ENCODE measurements at regions of chr1 and their contacts with region 1.

Region 1: GRCh38 chr1:33094971-33095604 is 14.1 kb downstream of the AZIN2 start:
- DNase-seq: no peak
- H3K4me3 Mint-ChIP-seq: no peak overlapping the region
- H3K27ac Mint-ChIP-seq: no peak overlapping the region
- H3K4me1 Mint-ChIP-seq: peaks cover 55% of the 10 kb centered on the region
- H3K27me3 Mint-ChIP-seq: no peaks in the 10 kb centered on the region

Region 2: GRCh38 chr1:32817159-32817814 is 277.8 kb before region 1 on chr1 and contains the starts of genes S100PBP and YARS1:
- CTCF ChIA-PET with region 1: no interaction called
- POLR2A ChIA-PET with region 1: interaction called, 10 read pairs
- DNase-seq: peak; percentile 100
- H3K4me3 Mint-ChIP-seq: peak within 1 kb of the TSS; percentile 93
- H3K27ac Mint-ChIP-seq: peak within 1 kb of the TSS; percentile 89
- H3K4me1 Mint-ChIP-seq: peaks cover 54% of the 10 kb centered on the region
- H3K27me3 Mint-ChIP-seq: no peaks in the 10 kb centered on the region
- total RNA-seq, gene S100PBP: 78.4 to 84.0 TPM
- total RNA-seq, gene YARS1: 204 to 214 TPM

Region 3: GRCh38 chr1:32861904-32862695 is 233.0 kb before region 1 on chr1:
- CTCF ChIA-PET with region 1: no interaction called
- POLR2A ChIA-PET with region 1: no interaction called
- DNase-seq: no peak
- H3K4me3 Mint-ChIP-seq: no peak overlapping the region
- H3K27ac Mint-ChIP-seq: no peak overlapping the region
- H3K4me1 Mint-ChIP-seq: no peaks in the 10 kb centered on the region
- H3K27me3 Mint-ChIP-seq: no peaks in the 10 kb centered on the region

Region 4: DNA sequence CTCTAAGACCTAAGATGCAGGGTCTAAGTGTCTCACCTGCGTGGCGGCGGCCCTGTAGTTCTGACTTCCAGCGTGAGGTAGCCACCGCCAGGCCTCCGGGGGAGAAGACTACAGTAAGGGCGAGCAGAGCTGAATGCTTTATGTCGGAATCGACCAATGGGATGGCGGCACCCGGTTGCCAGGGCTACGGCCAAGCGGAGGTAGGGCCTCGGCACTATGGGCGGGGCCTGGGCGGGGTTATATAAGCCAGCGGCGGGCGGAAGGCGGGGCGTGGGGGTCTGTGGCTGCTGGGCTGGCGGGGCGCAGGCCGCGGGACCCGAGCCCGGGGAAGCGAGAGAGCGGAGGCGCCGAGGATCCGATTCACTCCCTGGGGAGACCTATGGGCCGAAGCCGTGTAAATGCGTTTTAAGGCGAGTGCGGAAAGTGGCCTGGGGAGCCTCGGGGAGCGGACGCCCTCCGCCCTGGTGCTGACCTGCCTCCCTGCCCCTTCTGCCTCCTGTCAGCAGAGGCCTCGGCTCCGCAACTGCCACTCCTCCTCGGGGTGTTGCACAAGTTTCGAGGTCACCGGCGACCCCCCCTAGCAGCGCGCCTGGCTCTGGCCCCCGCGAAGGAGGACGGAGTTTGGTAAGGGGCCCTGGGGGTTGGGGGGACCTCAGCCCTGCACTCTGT is 14.1 kb before region 1 on chr1 and contains the start of gene AZIN2:
- CTCF ChIA-PET with region 1: interaction called, 24 read pairs
- POLR2A ChIA-PET with region 1: interaction called, 3 read pairs
- DNase-seq: peak; percentile 97
- H3K4me3 Mint-ChIP-seq: peak within 1 kb of the TSS; percentile 73
- H3K27ac Mint-ChIP-seq: no peak within 1 kb of the TSS
- H3K4me1 Mint-ChIP-seq: peaks cover 21% of the 10 kb centered on the region
- H3K27me3 Mint-ChIP-seq: peaks cover 19% of the 10 kb centered on the region
- total RNA-seq, gene AZIN2: 3.9 to 4.5 TPM